HepG2 (cell line): ENCODE measurements at regions of chr7 and their contacts with region 1.

Region 1: DNA sequence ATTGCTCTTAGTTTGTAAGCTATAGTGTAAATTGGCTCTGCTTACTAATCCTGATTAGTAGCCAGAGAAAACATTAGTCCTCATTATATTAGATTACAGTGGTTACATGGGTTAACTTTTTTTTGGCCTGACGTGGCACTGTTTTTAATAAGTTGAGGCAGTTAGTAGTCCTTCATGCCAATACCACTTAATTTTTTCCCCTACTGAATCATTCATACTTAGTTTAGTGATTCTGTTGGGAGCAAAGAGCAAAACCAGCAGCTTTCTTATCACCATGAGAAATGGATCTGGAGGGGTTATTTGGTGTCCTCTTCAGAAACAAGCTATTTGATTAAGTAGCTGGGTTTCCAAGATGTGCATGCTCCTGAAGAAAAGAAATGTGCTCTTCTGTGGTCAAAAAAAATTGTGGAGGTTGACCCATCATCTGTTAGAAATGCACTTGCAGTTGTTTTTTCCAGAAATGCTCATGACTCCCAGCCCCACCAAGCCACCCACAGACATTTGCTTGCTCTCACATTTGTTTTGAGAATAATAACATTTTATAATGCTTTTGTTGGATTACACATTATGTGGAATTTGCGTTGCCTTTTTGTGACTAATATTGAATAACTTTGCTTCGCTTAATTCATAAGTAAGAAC is 258.5 kb downstream of the HDAC9 start:
- DNase-seq: no peak
- ATAC-seq: no peak
- H3K4me3 ChIP-seq: no peak overlapping the region
- H3K27ac ChIP-seq: no peak overlapping the region
- H3K4me1 ChIP-seq: no peaks in the 10 kb centered on the region
- H3K27me3 ChIP-seq: no peaks in the 10 kb centered on the region
- CTCF ChIP-seq: no peak
- EP300 ChIP-seq: no peak
- POLR2A ChIP-seq: no peak
- RAD21 ChIP-seq: no peak

Region 2: GRCh38 chr7:18693406-18693805 is 60.7 kb before region 1 on chr7:
- CTCF ChIA-PET with region 1: no interaction called
- POLR2A ChIA-PET with region 1: no interaction called
- in situ Hi-C with region 1: no loop called
- intact Hi-C with region 1: loop called (anchors 10 kb)
- DNase-seq: no peak
- ATAC-seq: no peak
- H3K4me3 ChIP-seq: no peak overlapping the region
- H3K27ac ChIP-seq: no peak overlapping the region
- H3K4me1 ChIP-seq: no peaks in the 10 kb centered on the region
- H3K27me3 ChIP-seq: no peaks in the 10 kb centered on the region
- CTCF ChIP-seq: no peak
- EP300 ChIP-seq: no peak
- POLR2A ChIP-seq: no peak
- RAD21 ChIP-seq: no peak

Region 3: GRCh38 chr7:18829858-18830285 is 75.8 kb after region 1 on chr7:
- CTCF ChIA-PET with region 1: no interaction called
- POLR2A ChIA-PET with region 1: no interaction called
- in situ Hi-C with region 1: no loop called
- intact Hi-C with region 1: no loop called
- DNase-seq: no peak
- ATAC-seq: no peak
- H3K4me3 ChIP-seq: no peak overlapping the region
- H3K27ac ChIP-seq: no peak overlapping the region
- H3K4me1 ChIP-seq: no peaks in the 10 kb centered on the region
- H3K27me3 ChIP-seq: no peaks in the 10 kb centered on the region
- CTCF ChIP-seq: no peak
- EP300 ChIP-seq: no peak
- POLR2A ChIP-seq: no peak
- RAD21 ChIP-seq: no peak